H1 (cell line): ENCODE measurements at regions of chr10 and their contacts with region 1.

Region 1: DNA sequence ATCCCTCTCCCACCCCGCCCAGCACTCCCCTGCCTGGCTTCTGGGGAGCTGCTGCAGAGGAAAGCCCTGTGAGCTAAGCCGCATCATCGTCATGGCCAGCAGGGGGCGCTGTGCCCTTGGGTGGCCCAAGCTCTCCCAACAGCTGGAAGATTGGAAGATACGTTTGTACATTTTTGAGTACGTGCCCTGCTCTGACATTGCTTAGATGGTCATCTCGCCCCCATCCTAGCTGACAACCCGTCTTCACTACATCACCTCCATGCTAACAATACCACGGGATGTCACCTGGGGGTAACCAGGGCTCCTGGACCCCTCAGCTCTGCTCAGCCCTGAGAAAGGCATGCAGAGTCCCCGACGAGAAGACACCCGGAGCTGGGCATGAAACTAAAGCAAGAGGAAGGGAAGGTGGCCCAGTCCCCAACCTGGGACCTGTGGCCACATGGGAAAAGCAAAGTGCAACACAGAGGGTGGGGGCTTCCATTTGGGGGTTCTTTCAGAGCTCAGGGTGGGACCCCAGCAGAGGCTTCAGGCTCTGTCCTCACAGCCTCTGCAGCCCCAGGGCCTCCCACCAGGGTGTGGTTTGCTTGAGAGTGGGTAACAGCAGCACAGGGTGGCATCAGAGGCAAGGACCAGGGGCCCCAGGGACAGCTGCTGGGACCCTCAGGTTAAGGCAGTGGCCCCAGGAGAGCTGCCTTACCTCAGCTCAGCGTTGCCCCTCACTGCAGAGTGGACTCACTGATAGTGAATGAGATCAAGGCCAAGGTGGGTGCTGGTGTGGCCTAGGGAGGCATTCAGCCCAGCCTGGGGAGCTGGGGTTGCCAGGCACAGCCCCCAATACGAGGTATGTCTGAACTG is 136.7 kb downstream of the PTPN20 start:
- DNase-seq: peak; percentile 34 to 90
- H3K4me3 ChIP-seq: no peak overlapping the region
- H3K27ac ChIP-seq: no peak overlapping the region
- H3K4me1 ChIP-seq: no peaks in the 10 kb centered on the region
- H3K27me3 ChIP-seq: no peaks in the 10 kb centered on the region
- CTCF ChIP-seq: peak; percentile 88 to 96 (median 91)
- EP300 ChIP-seq: no peak
- POLR2A ChIP-seq: no peak
- RAD21 ChIP-seq: peak; percentile 85 to 87

Region 2: DNA sequence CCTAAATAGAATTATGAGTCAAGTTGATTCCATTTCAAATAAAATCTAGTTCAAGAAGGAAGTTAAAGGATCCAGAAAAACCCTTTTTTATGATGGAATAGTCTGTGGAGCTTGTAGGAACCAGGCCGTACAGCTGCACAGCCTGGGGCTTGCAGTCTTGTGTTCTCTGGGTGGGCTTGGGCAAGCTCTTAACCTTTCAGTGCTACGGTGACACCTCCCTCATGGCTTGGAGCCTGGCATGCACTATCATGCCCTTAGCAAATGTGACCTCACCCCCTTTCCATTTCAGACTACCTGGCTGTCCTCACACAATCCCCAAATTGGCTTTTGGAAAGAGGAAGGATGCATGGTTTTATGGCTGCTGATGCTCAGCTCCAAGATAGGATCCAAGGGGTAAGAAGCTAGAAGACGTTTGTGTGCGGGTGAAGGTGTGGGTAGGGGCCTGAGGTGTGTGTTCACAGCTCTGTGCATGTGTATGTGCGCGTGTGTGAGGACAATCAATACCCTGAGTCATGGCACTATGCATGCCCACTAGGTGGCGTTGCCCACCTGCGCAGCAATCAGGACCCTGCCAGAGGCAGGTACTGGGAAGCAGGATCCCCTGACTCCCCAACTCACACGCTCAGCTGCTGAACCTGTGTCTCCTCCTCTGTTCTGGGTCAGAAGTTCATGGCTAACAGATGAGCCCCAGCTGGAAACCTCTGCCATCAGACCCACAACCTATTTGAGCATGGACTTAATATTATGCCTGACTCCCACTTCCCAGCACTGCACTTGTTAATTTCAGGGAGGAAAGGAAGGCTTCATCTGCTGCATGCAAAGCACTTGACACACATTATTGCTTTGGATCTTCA is 23.3 kb before region 1 on chr10:
- CTCF ChIA-PET with region 1: interaction called, 69 read pairs
- POLR2A ChIA-PET with region 1: no interaction called
- DNase-seq: peak; percentile 33 to 85
- H3K4me3 ChIP-seq: no peak overlapping the region
- H3K27ac ChIP-seq: no peak overlapping the region
- H3K4me1 ChIP-seq: no peaks in the 10 kb centered on the region
- H3K27me3 ChIP-seq: 0 out of 7 replicates have a peak, but pooled peaks cover 0 to 2% (median 0%) of the 10 kb centered on the region in 4 experiments
- CTCF ChIP-seq: peak; percentile 91 to 98 (median 96)
- EP300 ChIP-seq: no peak
- POLR2A ChIP-seq: no peak
- RAD21 ChIP-seq: peak; percentile 91 to 94

Region 3: GRCh38 chr10:47062466-47063200 is 14.7 kb after region 1 on chr10:
- CTCF ChIA-PET with region 1: interaction called, 27 read pairs
- POLR2A ChIA-PET with region 1: no interaction called
- DNase-seq: no peak
- H3K4me3 ChIP-seq: no peak overlapping the region
- H3K27ac ChIP-seq: no peak overlapping the region
- H3K4me1 ChIP-seq: no peaks in the 10 kb centered on the region
- H3K27me3 ChIP-seq: no peaks in the 10 kb centered on the region; a peak in 1 of 7 replicates
- CTCF ChIP-seq: peak; percentile 46 to 62 (median 53); a peak in 3 of 4 replicates
- EP300 ChIP-seq: no peak
- POLR2A ChIP-seq: no peak
- RAD21 ChIP-seq: peak; percentile 63 to 64

Region 4: GRCh38 chr10:47121341-47121740 is 73.4 kb after region 1 on chr10:
- CTCF ChIA-PET with region 1: interaction called, 11 read pairs
- POLR2A ChIA-PET with region 1: no interaction called
- DNase-seq: peak in 1 of 2 experiments; percentile 27
- H3K4me3 ChIP-seq: no peak overlapping the region
- H3K27ac ChIP-seq: no peak overlapping the region
- H3K4me1 ChIP-seq: no peaks in the 10 kb centered on the region; a peak in 1 of 7 replicates
- H3K27me3 ChIP-seq: no peaks in the 10 kb centered on the region
- CTCF ChIP-seq: no peak
- EP300 ChIP-seq: no peak
- POLR2A ChIP-seq: no peak
- RAD21 ChIP-seq: no peak

Region 5: GRCh38 chr10:47287365-47287802 is 239.5 kb after region 1 on chr10:
- CTCF ChIA-PET with region 1: interaction called, 13 read pairs
- POLR2A ChIA-PET with region 1: no interaction called
- DNase-seq: no peak
- H3K4me3 ChIP-seq: no peak overlapping the region
- H3K27ac ChIP-seq: no peak overlapping the region
- H3K4me1 ChIP-seq: no peaks in the 10 kb centered on the region
- H3K27me3 ChIP-seq: no peaks in the 10 kb centered on the region
- CTCF ChIP-seq: no peak
- EP300 ChIP-seq: no peak
- POLR2A ChIP-seq: no peak
- RAD21 ChIP-seq: no peak

Region 6: GRCh38 chr10:47306387-47307210 is 258.7 kb after region 1 on chr10:
- CTCF ChIA-PET with region 1: interaction called, 201 read pairs
- POLR2A ChIA-PET with region 1: no interaction called
- DNase-seq: no peak
- H3K4me3 ChIP-seq: no peak overlapping the region
- H3K27ac ChIP-seq: no peak overlapping the region
- H3K4me1 ChIP-seq: peaks cover 0 to 5% (median 0%) of the 10 kb centered on the region in 4 experiments; a peak in 3 of 7 replicates
- H3K27me3 ChIP-seq: peaks cover under 1 to 11% (median 8%) of the 10 kb centered on the region in 4 experiments
- CTCF ChIP-seq: no peak
- EP300 ChIP-seq: no peak
- POLR2A ChIP-seq: no peak
- RAD21 ChIP-seq: no peak

Region 7: GRCh38 chr10:47318706-47319105 is 270.8 kb after region 1 on chr10:
- CTCF ChIA-PET with region 1: interaction called, 201 read pairs
- POLR2A ChIA-PET with region 1: no interaction called
- DNase-seq: no peak
- H3K4me3 ChIP-seq: no peak overlapping the region
- H3K27ac ChIP-seq: no peak overlapping the region
- H3K4me1 ChIP-seq: no peaks in the 10 kb centered on the region
- H3K27me3 ChIP-seq: no peaks in the 10 kb centered on the region; a peak in 1 of 7 replicates
- CTCF ChIP-seq: no peak
- EP300 ChIP-seq: no peak
- POLR2A ChIP-seq: no peak
- RAD21 ChIP-seq: no peak

Region 8: DNA sequence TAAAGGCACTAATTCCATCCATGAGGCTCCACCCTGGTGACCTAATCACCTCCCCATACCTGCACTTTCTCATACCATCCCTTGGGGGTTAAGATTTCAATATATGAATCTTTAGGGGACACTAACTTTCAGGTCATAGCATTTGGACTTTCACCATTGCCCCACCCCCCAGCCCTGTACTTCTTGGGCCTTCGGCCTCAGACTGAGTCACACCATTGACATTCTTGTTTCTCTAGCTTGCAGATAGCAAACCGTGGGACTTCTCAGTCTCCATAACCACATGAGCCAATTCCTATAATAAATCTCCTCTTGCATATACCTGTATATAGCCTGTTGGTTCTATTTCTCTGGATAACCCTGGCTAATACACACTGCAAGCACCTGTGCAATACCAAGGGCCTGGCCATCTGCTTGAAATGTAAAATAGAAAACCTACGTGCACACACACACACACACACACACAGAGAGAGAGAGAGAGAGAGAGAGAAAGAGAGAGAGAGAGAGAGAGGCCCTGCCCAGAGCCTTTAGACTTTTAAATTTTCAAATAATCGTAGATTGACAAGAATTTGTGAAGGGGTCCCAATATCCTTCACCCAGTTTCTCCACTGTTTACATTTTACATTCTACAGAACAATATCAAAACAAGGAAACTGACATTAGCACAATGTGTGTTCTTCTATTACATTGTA is 410.7 kb after region 1 on chr10:
- CTCF ChIA-PET with region 1: no interaction called
- POLR2A ChIA-PET with region 1: no interaction called
- DNase-seq: peak in 1 of 2 experiments; percentile 10
- H3K4me3 ChIP-seq: no peak overlapping the region
- H3K27ac ChIP-seq: no peak overlapping the region
- H3K4me1 ChIP-seq: no peaks in the 10 kb centered on the region
- H3K27me3 ChIP-seq: no peaks in the 10 kb centered on the region
- CTCF ChIP-seq: no peak
- EP300 ChIP-seq: no peak
- POLR2A ChIP-seq: no peak
- RAD21 ChIP-seq: no peak